PC-3 (cell line): ENCODE measurements at regions of chrX and their contacts with region 1.

Region 1: DNA sequence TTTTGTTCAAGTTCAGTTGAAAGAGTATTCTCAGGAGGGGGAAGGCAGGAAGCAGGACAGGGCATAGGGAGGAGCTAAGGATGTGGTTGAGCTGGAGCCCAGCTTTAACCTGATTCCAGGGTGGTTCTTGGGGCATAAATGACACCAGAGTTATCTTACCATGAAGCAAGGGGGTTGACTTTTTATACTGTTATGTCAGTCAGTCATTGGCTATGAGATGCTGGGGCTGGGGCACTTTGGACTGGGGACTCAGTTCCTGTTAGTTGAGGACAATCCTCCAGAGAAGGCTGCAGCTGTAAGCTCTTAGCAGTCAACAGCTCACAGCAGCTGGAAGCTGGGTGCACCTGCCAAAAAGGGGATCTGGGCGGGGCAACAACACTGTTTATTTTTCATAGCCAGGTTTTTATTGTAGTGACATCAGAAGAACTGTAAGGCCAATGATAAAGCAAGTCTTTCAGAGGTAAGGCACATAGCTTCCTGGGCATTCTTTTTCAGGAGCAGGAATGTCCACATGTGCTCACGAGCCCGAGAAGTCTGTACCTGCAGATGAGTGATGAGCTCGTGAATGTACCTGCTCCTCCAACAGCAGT is 78.5 kb downstream of the MID1IP1 start:
- DNase-seq: peak; percentile 66
- ATAC-seq: peak; percentile 4
- H3K4me3 ChIP-seq: peak overlapping the region; percentile 38; the same call in 1 of the 2 replicates
- H3K27ac ChIP-seq: peak overlapping the region; percentile 97
- H3K4me1 ChIP-seq: peaks cover 57% of the 10 kb centered on the region
- H3K27me3 ChIP-seq: no peaks in the 10 kb centered on the region
- CTCF ChIP-seq: no peak

Region 2: DNA sequence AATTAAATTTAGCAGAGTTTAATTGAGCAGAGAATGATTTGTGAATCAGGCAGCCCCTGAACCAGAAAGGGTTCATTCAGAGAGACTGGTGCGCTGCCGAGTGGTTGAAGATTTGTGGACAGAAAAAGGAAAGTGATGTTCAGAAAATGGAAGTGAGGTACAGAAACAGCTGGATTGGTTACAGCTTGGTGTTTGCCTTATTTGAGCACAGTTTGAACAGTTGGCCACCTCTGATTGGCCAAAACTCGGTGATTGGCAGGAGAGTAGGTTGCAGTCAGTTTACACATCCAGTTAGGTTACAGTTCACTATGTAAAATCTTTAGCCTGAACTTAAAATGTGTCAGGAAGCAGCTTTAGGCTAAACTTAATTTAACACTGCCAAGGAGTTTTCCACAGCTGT is 63.6 kb before region 1 on chrX:
- CTCF ChIA-PET with region 1: no interaction called
- POLR2A ChIA-PET with region 1: no interaction called
- intact Hi-C with region 1: loop called (anchors 1 kb)
- DNase-seq: no peak
- ATAC-seq: no peak
- H3K4me3 ChIP-seq: no peak overlapping the region
- H3K27ac ChIP-seq: no peak overlapping the region
- H3K4me1 ChIP-seq: peaks cover 33% of the 10 kb centered on the region
- H3K27me3 ChIP-seq: no peaks in the 10 kb centered on the region
- CTCF ChIP-seq: no peak

Region 3: DNA sequence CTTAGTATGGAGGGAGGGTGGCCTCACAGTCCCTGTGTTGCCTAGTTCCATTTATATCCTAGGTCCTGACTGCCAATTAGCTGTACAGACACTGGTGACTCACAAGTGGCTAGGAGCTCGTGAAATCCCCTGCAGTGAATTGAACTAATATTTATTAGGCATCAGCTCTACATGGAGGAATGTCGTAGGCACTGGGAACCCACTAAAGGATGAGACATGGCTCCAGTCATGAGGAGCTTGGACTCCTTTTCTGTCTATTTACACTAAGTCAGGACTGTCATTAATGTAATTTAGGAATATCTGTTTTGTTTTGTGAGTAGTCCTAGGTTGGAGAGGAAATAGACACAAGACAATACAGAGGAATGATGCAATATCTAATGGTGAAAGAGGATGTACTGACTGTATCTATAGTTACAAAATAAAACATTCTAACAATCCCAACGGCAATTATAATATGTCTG is 10.8 kb before region 1 on chrX:
- CTCF ChIA-PET with region 1: no interaction called
- POLR2A ChIA-PET with region 1: interaction called, 10 read pairs
- intact Hi-C with region 1: no loop called
- DNase-seq: peak; percentile 70
- ATAC-seq: peak; percentile 79
- H3K4me3 ChIP-seq: no peak overlapping the region
- H3K27ac ChIP-seq: peak overlapping the region; percentile 94
- H3K4me1 ChIP-seq: peaks cover 45% of the 10 kb centered on the region
- H3K27me3 ChIP-seq: no peaks in the 10 kb centered on the region
- CTCF ChIP-seq: no peak

Region 4: GRCh38 chrX:38939067-38939466 is 59.3 kb after region 1 on chrX:
- CTCF ChIA-PET with region 1: no interaction called
- POLR2A ChIA-PET with region 1: no interaction called
- intact Hi-C with region 1: no loop called
- DNase-seq: no peak
- ATAC-seq: no peak
- H3K4me3 ChIP-seq: no peak overlapping the region
- H3K27ac ChIP-seq: no peak overlapping the region
- H3K4me1 ChIP-seq: no peaks in the 10 kb centered on the region
- H3K27me3 ChIP-seq: no peaks in the 10 kb centered on the region
- CTCF ChIP-seq: no peak

Region 5: GRCh38 chrX:40188573-40189432 is 1309.1 kb after region 1 on chrX:
- CTCF ChIA-PET with region 1: no interaction called
- POLR2A ChIA-PET with region 1: no interaction called
- intact Hi-C with region 1: no loop called
- DNase-seq: no peak
- ATAC-seq: no peak
- H3K4me3 ChIP-seq: no peak overlapping the region
- H3K27ac ChIP-seq: no peak overlapping the region
- H3K4me1 ChIP-seq: no peaks in the 10 kb centered on the region
- H3K27me3 ChIP-seq: no peaks in the 10 kb centered on the region; the same call in 1 of the 2 replicates
- CTCF ChIP-seq: no peak